Adrenal gland (tissue), 19 donors: ENCODE measurements at regions of chr22 and their contacts with region 1.

Region 1: DNA sequence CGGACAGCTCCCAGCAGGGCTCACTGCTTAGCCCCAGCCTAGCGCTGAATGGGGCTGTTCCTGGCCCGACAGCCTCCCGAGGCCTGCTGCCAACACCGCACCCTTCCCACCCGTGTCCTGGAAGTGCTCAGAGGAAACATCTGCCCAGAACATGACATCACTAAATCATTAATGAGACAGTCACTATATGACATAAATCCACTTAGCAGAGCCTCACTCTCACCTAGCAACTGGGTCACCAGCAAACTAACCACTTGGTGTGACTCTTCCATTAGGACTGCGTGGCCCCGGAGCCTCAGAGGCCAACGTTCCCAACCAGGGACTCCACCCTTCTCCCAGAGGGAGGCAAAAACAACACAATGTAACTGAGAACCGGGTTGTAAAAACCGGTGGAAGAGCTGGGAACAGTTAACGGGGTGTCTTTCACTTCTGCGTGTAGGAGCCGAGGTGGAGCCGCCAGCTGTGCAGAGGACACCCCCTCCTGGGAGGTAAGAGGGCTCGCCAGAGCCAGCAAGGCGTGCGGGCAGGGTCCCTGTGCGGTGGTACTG is 21.4 kb upstream of the PACSIN2 start:
- DNase-seq: peak in 6 of 7 donors; percentile 39 to 84 (median 51)
- H3K4me3 ChIP-seq: no peak overlapping the region
- H3K27ac ChIP-seq: peak overlapping the region in 1 of 5 donors; percentile 55
- H3K4me1 ChIP-seq: no peaks in the 10 kb centered on the region
- H3K27me3 ChIP-seq: no peaks in the 10 kb centered on the region
- CTCF ChIP-seq: no peak
- POLR2A ChIP-seq: no peak

Region 2: DNA sequence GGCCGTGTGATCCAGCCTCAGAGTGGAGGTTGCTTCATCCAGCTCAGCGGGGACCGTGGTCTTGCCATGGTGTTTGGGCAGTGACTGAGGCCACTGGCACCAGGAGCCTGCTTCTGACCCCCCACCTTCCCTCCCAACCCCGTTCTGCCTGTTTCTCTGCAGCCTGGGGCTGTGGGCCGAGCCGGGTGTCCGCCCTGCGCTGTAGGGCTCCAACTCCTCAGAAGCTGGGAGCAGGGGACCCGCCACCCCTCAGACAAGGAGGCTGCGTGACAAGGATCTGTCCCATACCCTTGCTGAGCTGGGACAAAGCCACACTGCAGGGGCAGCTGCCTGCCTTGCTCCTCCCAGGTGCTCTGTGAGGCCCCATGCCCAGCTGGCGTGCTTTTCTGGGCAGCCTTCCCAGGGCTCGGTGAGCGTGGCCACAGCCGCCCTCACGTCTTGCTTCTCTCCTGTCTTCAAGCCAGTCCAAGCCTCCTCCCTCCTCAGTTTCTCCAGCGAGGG is 167.6 kb before region 1 on chr22:
- intact Hi-C with region 1: loop called in 1 of 2 experiments (anchors 2 kb)
- DNase-seq: peak; percentile 70 to 83 (median 77)
- H3K4me3 ChIP-seq: no peak overlapping the region
- H3K27ac ChIP-seq: peak overlapping the region in 4 of 5 donors; percentile 10 to 83 (median 44)
- H3K4me1 ChIP-seq: peaks cover 0 to 13% of the 10 kb centered on the region in 2 donors
- H3K27me3 ChIP-seq: no peaks in the 10 kb centered on the region
- CTCF ChIP-seq: no peak
- POLR2A ChIP-seq: no peak

Region 3: DNA sequence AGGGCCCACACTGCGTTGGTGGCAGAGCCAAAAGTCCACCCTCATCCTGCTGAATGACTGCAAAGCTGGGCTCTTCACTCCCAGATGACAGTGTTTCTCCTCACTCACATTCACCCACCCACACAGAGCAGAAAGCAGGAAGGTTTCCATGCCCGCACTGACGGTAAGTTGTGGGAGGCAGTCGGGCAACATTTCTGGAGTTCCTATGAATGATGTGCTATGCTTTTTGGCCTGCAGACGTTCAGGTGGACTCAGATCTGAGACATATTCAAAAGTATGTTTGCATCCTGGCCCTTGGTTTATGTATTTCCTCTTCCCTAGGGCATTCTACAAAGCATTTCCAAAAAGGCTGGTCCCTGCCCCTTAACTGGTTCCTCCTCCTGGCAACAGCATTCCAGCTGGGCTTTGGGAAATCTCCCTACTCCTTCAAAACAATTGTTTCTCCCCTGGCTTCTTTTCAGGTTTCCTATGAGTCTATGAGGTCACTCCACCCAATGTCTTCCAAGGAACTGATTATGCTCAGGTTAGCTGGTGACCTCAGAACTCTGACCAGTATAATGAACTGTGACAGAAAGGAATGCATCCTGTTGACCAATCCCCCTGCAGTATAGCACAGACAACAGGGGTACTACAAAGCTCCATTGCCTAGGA is 57.8 kb before region 1 on chr22:
- intact Hi-C with region 1: loop called in 1 of 2 experiments (anchors 10 kb)
- DNase-seq: peak in 1 of 7 donors; percentile 37
- H3K4me3 ChIP-seq: no peak overlapping the region
- H3K27ac ChIP-seq: peak overlapping the region in 4 of 5 donors; percentile 11 to 76 (median 28)
- H3K4me1 ChIP-seq: peaks cover 11 to 26% of the 10 kb centered on the region in 2 donors
- H3K27me3 ChIP-seq: no peaks in the 10 kb centered on the region
- CTCF ChIP-seq: no peak
- POLR2A ChIP-seq: no peak

Region 4: DNA sequence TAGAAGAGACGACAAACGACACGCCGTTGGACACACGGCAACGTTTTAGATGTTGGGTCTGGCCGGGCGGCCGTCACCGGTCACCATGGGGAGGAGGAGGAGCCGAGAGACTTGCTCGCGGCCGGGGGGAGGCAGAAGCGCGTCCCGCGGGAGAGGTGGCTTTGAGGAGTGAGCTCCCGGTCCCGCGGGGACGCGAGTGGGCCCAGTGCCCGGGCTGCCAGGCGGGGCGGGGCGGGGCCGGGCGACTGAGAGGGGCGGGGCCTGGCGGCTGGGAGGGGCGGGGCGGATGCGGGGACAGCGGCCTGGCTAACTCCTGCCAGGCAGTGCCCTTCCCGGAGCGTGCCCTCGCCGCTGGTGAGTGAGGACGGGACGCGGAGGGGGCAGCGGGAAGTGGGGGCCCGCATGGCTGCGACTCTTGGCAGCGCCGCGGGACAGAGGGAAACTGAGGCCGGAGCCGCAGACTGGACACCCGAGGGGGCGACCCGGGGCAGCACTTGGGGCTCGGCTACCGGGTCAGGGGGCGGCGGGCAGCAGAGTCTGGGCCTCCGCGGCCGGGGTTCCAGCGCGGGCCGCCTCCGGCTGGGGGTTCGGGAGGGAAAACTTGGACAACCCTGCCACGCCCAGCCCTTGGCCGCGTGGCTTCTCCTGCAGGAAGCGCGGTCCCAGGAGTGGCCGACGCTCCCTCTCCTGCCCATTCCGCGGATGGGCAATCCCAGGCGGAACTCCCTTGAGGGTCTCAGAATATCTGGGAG is 115.1 kb after region 1 on chr22 and contains the start of gene TSPO:
- intact Hi-C with region 1: no loop called
- DNase-seq: peak; percentile 85 to 90 (median 88)
- H3K4me3 ChIP-seq: peak within 1 kb of the TSS in 3 of 4 donors; percentile 54 to 81 (median 68)
- H3K27ac ChIP-seq: peak within 1 kb of the TSS; percentile 34 to 89 (median 67)
- H3K4me1 ChIP-seq: peaks cover 22 to 23% of the 10 kb centered on the region in 2 donors
- H3K27me3 ChIP-seq: no peaks in the 10 kb centered on the region
- CTCF ChIP-seq: no peak
- POLR2A ChIP-seq: peak in 1 of 2 donors; percentile 73
- total RNA-seq, gene TSPO: 16.8 to 881 (median 233) TPM